ENCODE measurements at regions of chr6 and their contacts with region 1.

Region 1: GRCh38 chr6:146857180-146857979 is 258.6 kb downstream of the ADGB start:
- DNase-seq: peak; percentile 97

Region 2: DNA sequence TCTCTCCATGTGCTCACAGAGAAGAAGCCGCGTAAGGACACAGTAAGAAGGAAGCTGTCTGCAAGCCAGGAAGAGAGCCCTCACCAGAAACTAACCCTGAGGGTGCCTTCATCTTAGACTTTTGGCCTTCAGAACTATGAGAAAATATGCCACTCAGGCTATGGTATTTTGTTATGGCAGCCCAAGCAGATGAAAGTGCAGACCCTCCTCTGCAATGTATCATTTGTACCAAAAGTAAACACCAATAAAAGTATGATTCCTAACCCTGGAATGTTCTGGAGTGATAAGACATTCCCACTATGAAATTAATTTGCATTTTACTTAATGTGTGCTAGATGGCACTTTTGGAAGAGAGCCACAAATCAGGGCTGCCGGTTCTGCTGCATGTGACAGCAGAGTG is 1977.9 kb before region 1 on chr6:
- intact Hi-C with region 1: no loop called
- DNase-seq: no peak

Region 3: GRCh38 chr6:147285087-147285855 is 427.9 kb after region 1 on chr6:
- intact Hi-C with region 1: loop called (anchors 10 kb)
- DNase-seq: no peak

Region 4: GRCh38 chr6:147298461-147298860 is 441.1 kb after region 1 on chr6:
- intact Hi-C with region 1: loop called in 1 of 2 experiments (anchors 10 kb)
- DNase-seq: no peak